Left cardiac atrium (tissue), 4 donors: ENCODE measurements at regions of chr2 and their contacts with region 1.

Region 1: DNA sequence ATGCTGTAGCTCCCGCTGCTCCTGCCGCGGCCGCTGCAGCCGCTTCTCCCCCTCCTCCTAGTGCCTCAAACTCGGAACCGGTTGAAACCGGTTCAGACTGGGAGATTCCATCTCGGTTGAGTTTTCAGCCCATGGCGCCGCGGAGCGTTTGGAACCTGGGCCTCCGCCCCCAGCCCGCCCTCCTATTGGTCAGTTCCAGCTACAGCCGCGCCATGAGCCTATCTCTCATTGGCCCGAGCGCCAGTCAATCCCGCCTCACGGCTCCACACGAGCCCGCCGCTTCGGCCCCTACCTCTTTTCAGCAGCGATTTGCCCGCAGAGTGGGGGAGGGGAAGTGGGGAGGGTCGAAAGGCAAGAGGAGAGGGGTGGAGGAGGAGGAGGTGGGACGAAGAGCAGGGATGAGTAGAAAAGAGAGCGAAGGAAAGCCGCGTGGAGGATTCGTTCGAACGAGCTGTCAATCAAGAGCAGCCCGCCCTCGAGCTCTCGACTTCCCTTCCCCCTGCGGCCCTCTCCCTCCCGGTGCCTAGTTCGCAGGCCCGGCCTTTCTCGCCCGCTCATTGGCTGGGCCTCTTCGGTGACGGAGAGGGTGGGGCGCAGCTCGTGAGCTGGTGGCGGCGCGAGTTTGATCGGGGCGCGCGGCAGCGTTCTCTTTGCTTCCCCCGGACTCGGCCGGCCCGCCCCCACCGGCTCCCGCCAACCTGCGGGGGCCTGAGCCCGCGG is at the start of gene XPO1:
- DNase-seq: peak; percentile 99
- ATAC-seq: peak; percentile 94 to 96
- total RNA-seq, gene XPO1: 70.9 to 75.2 TPM

Region 2: DNA sequence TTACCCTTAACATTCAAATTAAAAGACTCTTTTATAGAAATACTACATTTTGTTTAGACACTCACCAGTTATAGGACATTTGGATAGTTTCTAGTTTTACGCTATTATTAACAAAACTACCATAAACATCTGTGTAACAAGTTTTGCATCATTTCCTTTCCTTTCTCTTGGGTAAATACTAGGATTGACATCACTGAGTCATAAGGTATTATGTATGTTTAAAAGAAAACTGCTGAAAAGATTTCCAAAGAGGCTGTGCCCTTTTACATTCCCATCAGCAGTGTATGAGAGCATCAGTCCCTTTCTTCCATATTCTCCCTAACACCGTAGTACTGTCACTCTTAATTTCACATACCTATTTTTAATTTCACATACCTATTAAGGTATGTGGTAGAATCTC is 198.1 kb before region 1 on chr2:
- intact Hi-C with region 1: no loop called
- DNase-seq: no peak
- ATAC-seq: no peak

Region 3: DNA sequence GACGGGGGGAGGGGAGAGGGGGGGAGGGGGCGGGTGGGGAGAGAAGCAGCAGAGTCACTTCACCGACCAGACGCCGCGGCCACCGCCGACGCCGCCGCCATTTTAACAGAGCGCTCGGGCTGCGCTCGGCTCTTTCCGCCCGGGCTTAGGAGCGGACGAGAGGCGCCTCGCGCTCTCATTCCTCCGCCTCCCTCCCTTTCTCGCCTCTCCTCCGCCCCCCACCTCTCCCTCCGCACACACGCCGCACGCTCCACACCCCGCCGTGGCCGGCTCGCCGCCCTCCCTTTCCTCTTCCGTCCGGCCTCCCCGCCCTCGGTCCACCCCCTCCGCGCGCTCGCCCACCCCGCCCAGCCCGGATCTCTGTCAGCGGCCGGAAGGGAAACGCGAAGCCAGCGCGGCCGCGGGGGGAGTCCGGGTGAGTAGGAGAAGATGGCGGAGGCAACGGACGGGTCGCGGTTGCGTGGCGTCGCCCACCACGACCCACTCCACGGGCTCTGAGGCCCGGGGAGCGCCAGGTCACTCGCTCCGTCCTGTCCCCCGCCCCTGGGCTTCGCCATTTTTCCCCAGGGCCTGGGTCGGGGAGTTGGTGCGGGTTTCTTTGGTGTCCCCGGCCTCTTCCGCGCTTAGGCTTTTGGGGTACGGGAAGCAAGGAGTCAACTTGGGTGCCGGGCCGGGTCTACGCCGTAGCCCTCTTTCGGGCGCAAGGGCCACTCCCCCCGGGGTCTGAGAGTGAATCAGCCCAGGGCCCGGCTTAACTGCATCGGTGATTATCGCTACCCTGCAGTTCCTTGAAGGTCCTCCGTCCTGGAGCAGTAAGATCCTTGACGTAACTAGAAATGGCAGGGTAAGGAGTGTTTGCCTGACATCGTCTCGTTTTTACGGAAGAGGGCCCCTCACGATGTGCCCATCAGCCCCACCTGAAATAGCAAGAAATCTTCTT is 67.1 kb before region 1 on chr2 and contains the start of gene USP34:
- intact Hi-C with region 1: loop called in 1 of 2 experiments (anchors 5 kb)
- DNase-seq: peak; percentile 95
- ATAC-seq: peak; percentile 96 to 98
- total RNA-seq, gene USP34: 44.1 to 60.4 TPM

Region 4: DNA sequence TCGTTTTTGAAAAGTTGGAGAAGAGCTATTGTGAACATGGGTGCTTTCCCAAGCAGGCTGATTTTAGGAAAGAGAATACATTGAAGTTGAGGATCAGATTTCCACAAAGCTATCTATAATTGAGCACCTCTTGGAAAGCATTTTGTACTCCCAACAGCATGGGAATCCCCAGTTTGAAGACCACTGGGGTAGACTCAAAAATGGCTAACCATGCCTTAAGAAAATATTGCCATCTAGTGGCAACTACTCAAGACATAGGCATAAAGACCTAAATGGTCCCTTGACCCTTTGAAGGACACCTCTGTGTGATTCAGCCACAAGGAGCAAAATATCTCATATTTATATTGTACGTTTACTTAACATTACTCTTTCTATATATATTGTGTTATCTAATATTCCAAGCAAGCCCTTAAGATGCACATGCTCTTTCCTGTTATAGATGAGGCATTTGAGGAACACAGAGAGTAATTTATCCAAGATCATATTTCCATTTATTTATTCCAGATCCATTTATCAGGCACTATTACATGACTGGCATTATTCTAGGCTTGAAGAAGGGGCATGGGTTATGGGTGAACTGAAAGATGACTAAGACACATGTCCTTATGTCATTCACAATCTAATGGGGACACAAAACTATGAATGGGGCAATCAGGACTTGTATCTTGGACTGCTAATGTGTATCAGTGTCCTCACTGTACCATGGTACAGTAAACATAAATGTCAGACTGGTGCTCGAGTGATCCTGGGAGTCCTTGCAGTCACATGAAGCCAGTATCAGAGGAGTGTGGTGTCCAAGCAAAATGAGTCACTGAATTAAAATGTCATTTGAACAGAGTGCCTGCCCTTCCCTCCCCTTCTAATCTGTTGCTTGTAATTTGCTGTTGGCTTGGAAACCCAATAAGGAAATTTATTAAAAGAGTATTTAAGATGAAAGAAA is 120.8 kb after region 1 on chr2:
- intact Hi-C with region 1: loop called in 1 of 2 experiments (anchors 2 kb)
- DNase-seq: no peak
- ATAC-seq: peak; percentile 80 to 90

Region 5: DNA sequence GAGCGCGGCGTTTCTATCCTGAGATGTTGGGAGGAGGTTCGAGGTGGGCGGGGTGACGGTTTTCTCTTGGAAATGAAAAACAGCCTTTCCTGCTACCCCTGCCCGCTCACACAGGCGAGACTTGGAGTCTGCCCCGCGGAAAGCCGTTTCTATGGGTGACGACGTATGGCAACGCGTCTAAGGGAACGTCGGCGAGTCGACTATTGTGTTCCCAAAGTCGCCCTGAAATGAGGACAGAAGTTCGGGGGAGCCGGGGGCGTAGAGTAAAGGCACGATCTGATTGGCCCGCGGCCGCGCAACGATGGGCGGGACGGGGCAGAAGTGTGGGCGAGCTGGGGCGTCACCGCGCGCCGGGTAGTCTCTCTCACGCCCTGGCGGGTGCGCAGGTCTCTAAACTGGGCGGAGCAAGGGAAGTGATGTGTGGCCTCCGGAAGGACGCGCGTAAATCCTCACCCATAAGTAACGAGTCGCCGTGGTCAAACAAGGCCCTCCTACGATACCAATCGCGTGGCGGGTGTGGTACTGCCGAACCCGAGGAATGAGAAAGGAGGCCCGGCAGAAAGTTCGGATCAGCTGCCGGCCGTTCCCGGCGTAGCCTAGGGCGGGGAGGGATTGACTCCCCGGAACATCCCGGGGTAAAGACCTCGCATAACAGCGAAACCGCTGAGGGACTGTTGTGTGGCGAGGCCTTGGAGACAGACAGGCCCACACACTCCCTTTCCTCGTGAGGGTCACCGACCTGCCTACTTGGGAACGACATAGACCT is 225.9 kb after region 1 on chr2:
- intact Hi-C with region 1: loop called (anchors 2 to 5 kb)
- DNase-seq: peak; percentile 97
- ATAC-seq: peak; percentile 99 to 100